Mammary epithelial cell (primary cell): ENCODE measurements at regions of chr17 and their contacts with region 1.

Region 1: DNA sequence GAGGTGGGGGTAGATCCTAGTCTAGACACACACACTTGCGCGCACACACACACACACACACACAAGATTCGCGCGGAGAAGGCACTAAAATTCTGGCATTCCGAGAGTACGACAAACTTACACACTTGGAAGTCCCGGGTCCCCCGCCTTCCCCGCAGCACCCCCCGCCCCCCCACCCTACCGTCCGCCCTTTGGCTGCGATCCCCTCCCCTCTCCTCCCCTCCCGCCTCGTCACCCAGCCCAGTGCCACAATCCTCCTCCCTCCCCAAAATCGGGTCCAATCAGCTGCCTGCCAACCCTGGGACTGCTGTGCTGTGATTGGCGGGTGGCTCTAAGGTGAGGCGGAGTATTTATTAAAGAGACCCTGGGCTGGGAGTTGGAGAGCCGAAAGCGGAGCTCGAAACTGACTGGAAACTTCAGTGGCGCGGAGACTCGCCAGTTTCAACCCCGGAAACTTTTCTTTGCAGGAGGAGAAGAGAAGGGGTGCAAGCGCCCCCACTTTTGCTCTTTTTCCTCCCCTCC is at the start of gene SOX9:
- DNase-seq: peak; percentile 98
- H3K4me3 ChIP-seq: peak within 1 kb of the TSS; percentile 67 to 98 (median 96)
- H3K27ac ChIP-seq: peak within 1 kb of the TSS; percentile 88
- H3K4me1 ChIP-seq: peaks cover 55% of the 10 kb centered on the region
- H3K27me3 ChIP-seq: no peaks in the 10 kb centered on the region
- CTCF ChIP-seq: no peak
- total RNA-seq, gene SOX9: 77.4 to 81.9 TPM

Region 2: GRCh38 chr17:71084219-71084618 is 1036.5 kb before region 1 on chr17:
- CTCF ChIA-PET with region 1: no interaction called
- dilution Hi-C with region 1: no loop called
- in situ Hi-C with region 1: no loop called
- intact Hi-C with region 1: loop called (anchors 10 kb)
- DNase-seq: peak; percentile 35
- H3K4me3 ChIP-seq: no peak overlapping the region
- H3K27ac ChIP-seq: no peak overlapping the region
- H3K4me1 ChIP-seq: no peaks in the 10 kb centered on the region
- H3K27me3 ChIP-seq: no peaks in the 10 kb centered on the region
- CTCF ChIP-seq: peak; percentile 39 to 63

Region 3: GRCh38 chr17:71472809-71473789 is 647.6 kb before region 1 on chr17:
- CTCF ChIA-PET with region 1: no interaction called
- dilution Hi-C with region 1: no loop called
- in situ Hi-C with region 1: loop called in 1 of 2 experiments (anchors 10 kb)
- intact Hi-C with region 1: loop called (anchors 1 kb)
- DNase-seq: peak; percentile 63
- H3K4me3 ChIP-seq: no peak overlapping the region
- H3K27ac ChIP-seq: no peak overlapping the region
- H3K4me1 ChIP-seq: peaks cover 12% of the 10 kb centered on the region
- H3K27me3 ChIP-seq: no peaks in the 10 kb centered on the region
- CTCF ChIP-seq: peak; percentile 67 to 81

Region 4: GRCh38 chr17:71849783-71850768 is 270.6 kb before region 1 on chr17:
- CTCF ChIA-PET with region 1: no interaction called
- dilution Hi-C with region 1: no loop called
- in situ Hi-C with region 1: no loop called
- intact Hi-C with region 1: loop called (anchors 1 kb)
- DNase-seq: peak; percentile 71
- H3K4me3 ChIP-seq: no peak overlapping the region
- H3K27ac ChIP-seq: no peak overlapping the region
- H3K4me1 ChIP-seq: no peaks in the 10 kb centered on the region
- H3K27me3 ChIP-seq: no peaks in the 10 kb centered on the region
- CTCF ChIP-seq: no peak

Region 5: GRCh38 chr17:72056727-72057290 is 63.9 kb before region 1 on chr17:
- CTCF ChIA-PET with region 1: no interaction called
- dilution Hi-C with region 1: no loop called
- in situ Hi-C with region 1: no loop called
- intact Hi-C with region 1: loop called (anchors 1 kb)
- DNase-seq: peak; percentile 68
- H3K4me3 ChIP-seq: peak overlapping the region in 1 of 3 experiments; percentile 13
- H3K27ac ChIP-seq: no peak overlapping the region
- H3K4me1 ChIP-seq: peaks cover 42% of the 10 kb centered on the region
- H3K27me3 ChIP-seq: no peaks in the 10 kb centered on the region
- CTCF ChIP-seq: peak in 1 of 2 donors; percentile 41

Region 6: GRCh38 chr17:72165867-72166439 is 45.2 kb after region 1 on chr17:
- CTCF ChIA-PET with region 1: no interaction called
- dilution Hi-C with region 1: no loop called
- in situ Hi-C with region 1: no loop called
- intact Hi-C with region 1: no loop called
- DNase-seq: no peak
- H3K4me3 ChIP-seq: no peak overlapping the region
- H3K27ac ChIP-seq: no peak overlapping the region
- H3K4me1 ChIP-seq: no peaks in the 10 kb centered on the region
- H3K27me3 ChIP-seq: no peaks in the 10 kb centered on the region
- CTCF ChIP-seq: no peak

Region 7: GRCh38 chr17:72421128-72422092 is 300.7 kb after region 1 on chr17:
- CTCF ChIA-PET with region 1: no interaction called
- dilution Hi-C with region 1: no loop called
- in situ Hi-C with region 1: loop called in 1 of 2 experiments (anchors 10 kb)
- intact Hi-C with region 1: loop called (anchors 5 kb)
- DNase-seq: peak; percentile 98
- H3K4me3 ChIP-seq: no peak overlapping the region
- H3K27ac ChIP-seq: peak overlapping the region; percentile 92
- H3K4me1 ChIP-seq: peaks cover 52% of the 10 kb centered on the region
- H3K27me3 ChIP-seq: no peaks in the 10 kb centered on the region
- CTCF ChIP-seq: no peak